H1 (cell line): ENCODE measurements at regions of chr11 and their contacts with region 1.

Region 1: GRCh38 chr11:65588199-65589054 is 7.2 kb downstream of the KCNK7 start:
- DNase-seq: no peak
- H3K4me3 ChIP-seq: no peak overlapping the region
- H3K27ac ChIP-seq: no peak overlapping the region
- H3K4me1 ChIP-seq: peaks cover 3 to 31% (median 13%) of the 10 kb centered on the region in 4 experiments
- H3K27me3 ChIP-seq: peaks cover 27 to 57% (median 50%) of the 10 kb centered on the region in 4 experiments
- CTCF ChIP-seq: peak in 2 of 3 experiments; percentile 75 to 93; a peak in 3 of 4 replicates
- EP300 ChIP-seq: no peak
- POLR2A ChIP-seq: no peak
- RAD21 ChIP-seq: peak; percentile 58 to 71

Region 2: GRCh38 chr11:65551572-65552398 is 36.6 kb before region 1 on chr11:
- CTCF ChIA-PET with region 1: interaction called, 22 read pairs
- POLR2A ChIA-PET with region 1: no interaction called
- DNase-seq: peak in 1 of 2 experiments; percentile 92
- H3K4me3 ChIP-seq: no peak overlapping the region
- H3K27ac ChIP-seq: no peak overlapping the region
- H3K4me1 ChIP-seq: peaks cover 0 to 36% (median 27%) of the 10 kb centered on the region in 4 experiments; a peak in 6 of 7 replicates
- H3K27me3 ChIP-seq: peaks cover 2 to 39% (median 26%) of the 10 kb centered on the region in 4 experiments; a peak in 6 of 7 replicates
- CTCF ChIP-seq: peak in 2 of 3 experiments; percentile 74 to 84; a peak in 3 of 4 replicates
- EP300 ChIP-seq: no peak
- POLR2A ChIP-seq: no peak
- RAD21 ChIP-seq: peak; percentile 36 to 58

Region 3: GRCh38 chr11:65558002-65558931 is 30.2 kb before region 1 on chr11 and contains the start of gene LTBP3:
- CTCF ChIA-PET with region 1: interaction called, 22 read pairs
- POLR2A ChIA-PET with region 1: interaction called, 4 read pairs
- DNase-seq: peak in 1 of 2 experiments; percentile 72
- H3K4me3 ChIP-seq: peak within 1 kb of the TSS; percentile 39 to 77 (median 48)
- H3K27ac ChIP-seq: no peak within 1 kb of the TSS
- H3K4me1 ChIP-seq: peaks cover 0 to 51% (median 39%) of the 10 kb centered on the region in 4 experiments; a peak in 6 of 7 replicates
- H3K27me3 ChIP-seq: peaks cover 0 to 32% (median 21%) of the 10 kb centered on the region in 4 experiments; a peak in 5 of 7 replicates
- CTCF ChIP-seq: no peak
- EP300 ChIP-seq: no peak
- POLR2A ChIP-seq: no peak
- RAD21 ChIP-seq: no peak
- total RNA-seq, gene LTBP3: 12.8 and 15.3 TPM in 2 replicates

Region 4: GRCh38 chr11:65569973-65570918 is 18.2 kb before region 1 on chr11 and contains the start of gene ZNRD2:
- CTCF ChIA-PET with region 1: interaction called, 162 read pairs
- POLR2A ChIA-PET with region 1: interaction called, 36 read pairs
- DNase-seq: peak; percentile 95 to 96
- H3K4me3 ChIP-seq: peak within 1 kb of the TSS; percentile 67 to 97 (median 92)
- H3K27ac ChIP-seq: peak within 1 kb of the TSS; percentile 33; the same call in 1 of the 2 replicates
- H3K4me1 ChIP-seq: peaks cover 10 to 29% (median 18%) of the 10 kb centered on the region in 4 experiments
- H3K27me3 ChIP-seq: peaks cover 0 to 11% (median 6%) of the 10 kb centered on the region in 4 experiments; a peak in 6 of 7 replicates
- CTCF ChIP-seq: peak in 2 of 3 experiments; percentile 66 to 84; a peak in 3 of 4 replicates
- EP300 ChIP-seq: no peak
- POLR2A ChIP-seq: peak in 1 of 2 experiments; percentile 80; a peak in 2 of 3 replicates
- RAD21 ChIP-seq: peak; percentile 44 to 50; a peak in 3 of 4 replicates
- total RNA-seq, gene ZNRD2: 53.4 and 56.1 TPM in 2 replicates

Region 5: DNA sequence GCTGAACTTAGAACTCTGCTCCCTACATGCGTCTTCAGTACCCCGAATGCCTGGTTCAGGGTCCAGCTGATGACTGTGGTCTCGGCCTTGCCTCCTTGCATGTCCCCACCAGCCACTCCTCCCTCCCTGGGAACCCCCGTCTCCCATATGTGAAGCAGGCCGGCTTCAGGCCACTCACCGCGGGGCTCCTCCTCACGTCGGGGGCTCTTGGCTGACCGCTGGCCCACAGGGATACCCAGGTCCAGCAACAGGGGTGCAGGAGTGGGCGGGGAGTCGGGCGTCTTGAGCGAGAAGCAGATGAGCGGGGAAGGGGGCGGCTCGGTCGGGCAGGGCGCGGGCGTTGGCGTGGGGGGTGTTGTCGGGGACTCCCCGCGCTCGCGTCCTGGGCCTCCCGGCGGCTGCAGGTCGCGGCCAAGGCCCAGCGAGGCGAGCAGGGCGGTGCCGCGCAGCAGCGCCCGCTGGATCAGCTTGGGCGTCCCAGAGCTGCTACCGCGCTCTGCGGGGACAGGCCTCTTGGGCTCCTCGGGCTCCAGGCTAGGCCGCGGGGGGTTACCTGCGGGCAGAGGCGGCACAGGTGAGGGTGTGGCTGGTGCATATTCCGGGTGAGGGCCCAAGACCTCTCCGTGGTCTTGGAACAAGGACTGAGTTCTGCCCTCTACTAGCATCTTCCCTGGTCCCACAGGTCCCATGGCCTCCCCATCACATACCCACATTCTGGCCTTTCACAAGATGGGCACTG is 11.0 kb after region 1 on chr11:
- CTCF ChIA-PET with region 1: interaction called, 227 read pairs
- POLR2A ChIA-PET with region 1: interaction called, 12 read pairs
- DNase-seq: no peak
- H3K4me3 ChIP-seq: no peak overlapping the region
- H3K27ac ChIP-seq: no peak overlapping the region
- H3K4me1 ChIP-seq: no peaks in the 10 kb centered on the region
- H3K27me3 ChIP-seq: no peaks in the 10 kb centered on the region; a peak in 1 of 7 replicates
- CTCF ChIP-seq: no peak
- EP300 ChIP-seq: no peak
- POLR2A ChIP-seq: no peak
- RAD21 ChIP-seq: no peak

Region 6: DNA sequence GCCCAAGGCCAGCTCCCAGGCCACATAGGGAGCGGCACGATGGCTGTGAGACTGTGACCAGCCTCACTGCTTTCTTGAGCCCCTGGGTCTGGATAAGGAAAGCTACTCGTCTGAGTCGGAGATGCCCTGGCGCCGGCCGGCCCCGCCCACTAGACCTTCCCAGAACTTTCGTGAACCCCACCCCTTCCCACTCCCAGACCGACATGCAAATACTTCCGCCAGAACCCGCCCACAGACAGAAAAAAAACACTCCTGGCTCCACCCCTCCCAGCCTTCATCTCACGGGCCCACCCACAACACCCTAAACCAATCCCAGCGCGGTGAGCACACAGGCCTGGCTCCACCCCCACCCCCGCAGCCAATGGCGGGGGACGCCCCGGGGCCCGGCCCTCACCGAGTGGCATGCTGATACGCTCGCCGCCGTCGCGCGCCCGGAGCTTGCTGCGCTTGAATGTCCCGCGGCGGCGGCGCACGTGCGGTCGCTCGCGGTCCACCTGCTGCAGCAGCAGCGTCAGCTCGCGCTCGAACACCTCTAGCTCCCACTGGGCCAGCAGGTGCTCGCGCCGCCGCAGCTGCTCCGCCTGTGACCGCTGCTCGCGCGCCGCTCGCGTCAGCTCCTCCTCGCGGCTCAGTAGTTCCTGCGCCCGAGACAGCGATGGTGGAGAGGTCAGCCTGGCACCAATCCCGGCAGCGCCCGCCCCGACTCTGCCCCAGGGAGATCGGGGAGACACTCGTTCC is 18.6 kb after region 1 on chr11:
- CTCF ChIA-PET with region 1: interaction called, 227 read pairs
- POLR2A ChIA-PET with region 1: interaction called, 41 read pairs
- DNase-seq: peak; percentile 94
- H3K4me3 ChIP-seq: peak overlapping the region; percentile 27 to 57 (median 37)
- H3K27ac ChIP-seq: no peak overlapping the region
- H3K4me1 ChIP-seq: peaks cover 0 to 20% (median 7%) of the 10 kb centered on the region in 4 experiments; a peak in 6 of 7 replicates
- H3K27me3 ChIP-seq: no peaks in the 10 kb centered on the region; a peak in 1 of 7 replicates
- CTCF ChIP-seq: no peak
- EP300 ChIP-seq: no peak
- POLR2A ChIP-seq: peak in 1 of 2 experiments; percentile 35; a peak in 1 of 3 replicates
- RAD21 ChIP-seq: no peak

Region 7: GRCh38 chr11:65685981-65686380 is 97.6 kb after region 1 on chr11:
- CTCF ChIA-PET with region 1: no interaction called
- POLR2A ChIA-PET with region 1: no interaction called
- DNase-seq: no peak
- H3K4me3 ChIP-seq: no peak overlapping the region
- H3K27ac ChIP-seq: no peak overlapping the region
- H3K4me1 ChIP-seq: no peaks in the 10 kb centered on the region; a peak in 1 of 7 replicates
- H3K27me3 ChIP-seq: no peaks in the 10 kb centered on the region
- CTCF ChIP-seq: no peak
- EP300 ChIP-seq: no peak
- POLR2A ChIP-seq: no peak
- RAD21 ChIP-seq: no peak